ENCODE measurements at regions of chr14 and their contacts with region 1.

Region 1: GRCh38 chr14:68843471-68844209 is 50.8 kb upstream of the ZFP36L1 start:
- DNase-seq: peak; percentile 71 to 77 (median 75)
- H3K4me3 ChIP-seq: peak overlapping the region in 4 of 7 experiments; percentile 17 to 50 (median 37)
- H3K27ac ChIP-seq: no peak overlapping the region
- H3K4me1 ChIP-seq: peaks cover 0 to 17% (median 4%) of the 10 kb centered on the region in 4 experiments
- H3K27me3 ChIP-seq: no peaks in the 10 kb centered on the region

Region 2: DNA sequence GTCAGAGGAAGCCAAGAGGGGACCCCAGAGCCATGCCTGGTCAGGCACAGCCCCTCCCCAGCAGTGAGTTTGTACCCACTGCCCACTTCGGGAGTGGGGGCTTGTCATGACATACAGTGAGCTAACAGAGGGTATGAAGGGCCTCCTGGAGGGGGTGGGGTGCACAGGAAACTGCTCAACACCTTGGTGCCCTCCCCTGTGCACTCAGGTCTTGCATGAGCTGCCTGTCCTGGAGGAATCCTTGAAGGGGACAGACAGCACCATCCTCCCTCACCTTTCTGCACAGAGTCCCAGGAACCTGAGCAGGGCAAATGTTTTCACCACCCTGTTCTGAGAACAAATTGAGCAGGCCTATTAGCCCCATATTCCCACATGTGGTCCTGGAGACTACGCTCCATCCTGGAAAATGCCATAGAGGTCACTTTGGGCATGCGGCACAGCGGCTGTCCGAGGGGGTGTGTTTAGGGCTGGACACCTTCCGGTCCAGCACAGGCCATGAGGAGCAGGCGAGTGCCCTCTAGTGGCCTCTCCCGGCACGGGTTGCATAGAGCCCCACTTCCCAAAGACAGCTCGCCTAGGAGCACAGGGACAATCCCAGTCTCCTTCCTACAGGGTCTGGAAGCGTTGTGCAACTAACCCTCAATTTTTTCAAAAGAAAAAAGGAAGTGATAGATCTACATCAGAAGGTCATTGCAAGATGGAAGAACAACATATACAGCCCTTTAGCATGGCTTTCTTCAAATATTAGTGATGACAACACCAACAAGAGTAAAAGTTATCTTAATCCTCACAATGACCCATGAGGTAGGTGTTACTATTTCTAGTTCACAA is 18.9 kb before region 1 on chr14:
- CTCF ChIA-PET with region 1: interaction called, 13 read pairs
- POLR2A ChIA-PET with region 1: no interaction called
- DNase-seq: no peak
- H3K4me3 ChIP-seq: no peak overlapping the region
- H3K27ac ChIP-seq: no peak overlapping the region
- H3K4me1 ChIP-seq: peaks cover 3 to 31% (median 23%) of the 10 kb centered on the region in 4 experiments
- H3K27me3 ChIP-seq: no peaks in the 10 kb centered on the region

Measured in common myeloid progenitor, CD34-positive (primary cell).